B cell (primary cell): ENCODE measurements at regions of chr6 and their contacts with region 1.

Region 1: GRCh38 chr6:26363882-26364701 is 906 bp upstream of the BTN3A2 start:
- DNase-seq: peak; percentile 61
- ATAC-seq: no peak
- H3K4me3 ChIP-seq: peak overlapping the region; percentile 69 to 99 (median 71)
- H3K4me3 Mint-ChIP-seq: no peak overlapping the region
- H3K27ac ChIP-seq: peak overlapping the region; percentile 84 to 90
- H3K27ac Mint-ChIP-seq: no peak overlapping the region
- H3K4me1 ChIP-seq: peaks cover 35 to 46% of the 10 kb centered on the region in 2 donors
- H3K4me1 Mint-ChIP-seq: peaks cover 40% of the 10 kb centered on the region
- H3K27me3 ChIP-seq: peaks cover 0 to 12% (median 4%) of the 10 kb centered on the region in 4 experiments
- H3K27me3 Mint-ChIP-seq: peaks cover 9% of the 10 kb centered on the region
- CTCF ChIP-seq: no peak

Region 2: DNA sequence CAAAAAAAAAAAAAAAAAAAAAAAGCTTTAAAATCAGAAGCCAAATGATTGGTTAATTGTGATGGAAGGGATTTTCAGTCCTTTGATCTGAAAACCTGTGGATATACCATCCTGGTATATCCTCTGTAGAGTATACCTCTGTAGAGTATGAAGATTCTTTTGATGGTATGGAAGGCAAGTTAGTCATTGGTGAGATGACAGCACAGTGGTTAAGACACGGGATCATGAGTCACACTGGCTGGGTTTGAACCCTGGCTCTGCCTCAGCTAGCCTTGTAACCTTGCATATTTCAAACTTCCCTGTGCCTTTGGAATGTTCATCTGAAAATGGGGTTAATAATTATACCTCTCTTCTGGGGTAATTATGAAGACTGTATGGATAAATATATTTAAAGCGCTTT is 905.6 kb before region 1 on chr6:
- CTCF ChIA-PET with region 1: no interaction called
- POLR2A ChIA-PET with region 1: no interaction called
- intact Hi-C with region 1: no loop called
- DNase-seq: no peak
- ATAC-seq: no peak
- H3K4me3 ChIP-seq: no peak overlapping the region
- H3K4me3 Mint-ChIP-seq: no peak overlapping the region
- H3K27ac ChIP-seq: no peak overlapping the region
- H3K27ac Mint-ChIP-seq: no peak overlapping the region
- H3K4me1 ChIP-seq: no peaks in the 10 kb centered on the region
- H3K4me1 Mint-ChIP-seq: peaks cover under 1% of the 10 kb centered on the region
- H3K27me3 ChIP-seq: no peaks in the 10 kb centered on the region
- H3K27me3 Mint-ChIP-seq: peaks cover 4% of the 10 kb centered on the region
- CTCF ChIP-seq: no peak

Region 3: GRCh38 chr6:26383624-26384417 is 19.7 kb after region 1 on chr6:
- CTCF ChIA-PET with region 1: interaction called, 3 read pairs
- POLR2A ChIA-PET with region 1: no interaction called
- intact Hi-C with region 1: loop called (anchors 1 kb)
- DNase-seq: peak; percentile 54
- ATAC-seq: no peak
- H3K4me3 ChIP-seq: peak overlapping the region; percentile 70 to 97 (median 89)
- H3K4me3 Mint-ChIP-seq: peak overlapping the region; percentile 97
- H3K27ac ChIP-seq: peak overlapping the region; percentile 90 to 98
- H3K27ac Mint-ChIP-seq: peak overlapping the region; percentile 96
- H3K4me1 ChIP-seq: peaks cover 35 to 49% of the 10 kb centered on the region in 2 donors
- H3K4me1 Mint-ChIP-seq: peaks cover 66% of the 10 kb centered on the region
- H3K27me3 ChIP-seq: no peaks in the 10 kb centered on the region
- H3K27me3 Mint-ChIP-seq: no peaks in the 10 kb centered on the region
- CTCF ChIP-seq: no peak

Region 4: GRCh38 chr6:26401987-26402658 is 38.0 kb after region 1 on chr6 and contains the start of gene BTN3A1:
- CTCF ChIA-PET with region 1: no interaction called
- POLR2A ChIA-PET with region 1: no interaction called
- intact Hi-C with region 1: loop called (anchors 1 kb)
- DNase-seq: peak; percentile 86
- ATAC-seq: peak; percentile 87
- H3K4me3 ChIP-seq: peak within 1 kb of the TSS; percentile 51 to 98 (median 94)
- H3K4me3 Mint-ChIP-seq: peak within 1 kb of the TSS; percentile 98
- H3K27ac ChIP-seq: peak within 1 kb of the TSS; percentile 64 to 84
- H3K27ac Mint-ChIP-seq: peak within 1 kb of the TSS; percentile 97
- H3K4me1 ChIP-seq: peaks cover 43 to 53% of the 10 kb centered on the region in 2 donors
- H3K4me1 Mint-ChIP-seq: peaks cover 63% of the 10 kb centered on the region
- H3K27me3 ChIP-seq: no peaks in the 10 kb centered on the region
- H3K27me3 Mint-ChIP-seq: no peaks in the 10 kb centered on the region
- CTCF ChIP-seq: no peak
- total RNA-seq, gene BTN3A1: 173 and 175 TPM in 2 replicates